ENCODE measurements at regions of chr2 and their contacts with region 1.

Region 1: DNA sequence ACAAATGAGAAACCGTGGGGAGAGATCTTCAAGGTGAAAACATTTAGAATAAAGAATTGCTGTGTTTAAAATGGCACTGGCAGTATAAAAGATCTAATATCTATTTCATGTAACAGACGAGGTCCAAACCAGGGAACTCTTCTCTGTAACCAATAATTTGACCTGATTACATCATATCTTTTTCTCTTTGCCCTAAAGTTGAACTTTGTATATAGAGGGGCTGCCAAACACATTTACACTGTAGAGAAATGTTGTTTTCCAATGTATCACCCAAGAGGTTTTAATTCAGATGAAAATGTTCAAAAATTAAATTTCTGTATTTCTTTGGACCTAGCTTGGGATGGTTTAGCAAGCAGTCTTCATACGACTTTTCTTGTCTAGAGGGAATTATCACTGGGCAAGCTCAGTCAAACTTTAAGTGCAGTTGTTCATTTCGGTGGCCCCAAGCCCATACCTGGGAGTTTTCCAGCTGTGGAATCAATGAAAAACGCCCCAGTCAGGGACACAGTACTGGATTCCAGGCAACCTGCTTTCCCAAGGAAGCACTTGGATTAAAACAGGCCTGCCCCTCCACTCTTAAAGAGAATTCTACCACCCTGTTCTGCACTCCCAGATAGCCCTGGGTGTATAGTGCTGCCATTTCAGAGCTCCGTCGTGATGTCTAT is 208.5 kb upstream of the FN1 start:
- DNase-seq: no peak
- H3K4me3 ChIP-seq: no peak overlapping the region
- H3K4me3 Mint-ChIP-seq: no peak overlapping the region
- H3K27ac ChIP-seq: no peak overlapping the region
- H3K27ac Mint-ChIP-seq: no peak overlapping the region
- H3K4me1 ChIP-seq: no peaks in the 10 kb centered on the region
- H3K4me1 Mint-ChIP-seq: peaks cover 4% of the 10 kb centered on the region
- H3K27me3 ChIP-seq: no peaks in the 10 kb centered on the region
- H3K27me3 Mint-ChIP-seq: peaks cover 1 to 9% (median 2%) of the 10 kb centered on the region in 3 donors
- CTCF ChIP-seq: no peak

Region 2: DNA sequence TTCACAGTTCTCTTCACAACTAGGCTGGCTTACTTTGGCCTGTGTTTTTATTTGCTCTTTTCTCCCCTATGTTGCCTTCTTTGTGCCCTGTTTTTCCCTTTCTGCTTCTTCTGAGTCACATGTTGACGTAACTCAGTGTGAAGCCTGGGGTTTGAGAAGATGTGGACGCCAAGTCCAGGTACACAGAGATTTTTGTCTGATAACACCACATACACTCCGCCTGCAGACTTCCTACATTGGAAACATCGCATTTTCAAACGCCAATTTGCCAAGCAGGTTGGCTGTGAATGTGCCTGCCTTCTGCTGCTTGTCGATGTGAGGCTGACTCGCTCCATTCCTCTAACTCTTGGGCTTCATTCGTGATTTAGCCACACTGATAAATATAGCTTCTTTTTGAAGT is 145.9 kb before region 1 on chr2:
- intact Hi-C with region 1: no loop called
- DNase-seq: no peak
- H3K4me3 ChIP-seq: no peak overlapping the region
- H3K4me3 Mint-ChIP-seq: no peak overlapping the region
- H3K27ac ChIP-seq: no peak overlapping the region
- H3K27ac Mint-ChIP-seq: no peak overlapping the region
- H3K4me1 ChIP-seq: peaks cover 7 to 16% of the 10 kb centered on the region in 2 donors
- H3K4me1 Mint-ChIP-seq: peaks cover 11% of the 10 kb centered on the region
- H3K27me3 ChIP-seq: no peaks in the 10 kb centered on the region
- H3K27me3 Mint-ChIP-seq: peaks cover 0 to 5% (median 3%) of the 10 kb centered on the region in 3 donors
- CTCF ChIP-seq: no peak

Region 3: DNA sequence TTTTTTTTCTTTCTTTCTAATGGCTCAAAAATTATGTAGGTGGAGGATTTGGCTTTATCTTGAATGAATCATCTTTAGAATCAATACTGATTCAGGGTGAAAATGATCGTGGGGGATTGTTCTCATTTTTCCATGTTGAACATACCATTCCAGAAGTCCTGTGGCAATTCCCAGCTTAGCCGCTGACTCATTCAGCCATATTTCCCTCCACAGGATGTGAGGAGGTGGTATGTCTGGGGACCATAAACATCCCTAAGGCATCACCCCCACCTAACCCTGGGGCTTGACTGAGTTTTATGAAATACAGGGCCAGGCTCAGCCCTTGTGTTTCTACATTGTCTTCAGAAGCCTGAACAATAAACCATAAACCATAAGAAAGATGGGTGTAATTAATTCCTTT is 115.8 kb before region 1 on chr2:
- intact Hi-C with region 1: loop called in 1 of 2 experiments (anchors 10 kb)
- DNase-seq: no peak
- H3K4me3 ChIP-seq: no peak overlapping the region
- H3K4me3 Mint-ChIP-seq: no peak overlapping the region
- H3K27ac ChIP-seq: no peak overlapping the region
- H3K27ac Mint-ChIP-seq: no peak overlapping the region
- H3K4me1 ChIP-seq: peaks cover 6 to 11% of the 10 kb centered on the region in 2 donors
- H3K4me1 Mint-ChIP-seq: peaks cover 8% of the 10 kb centered on the region
- H3K27me3 ChIP-seq: no peaks in the 10 kb centered on the region
- H3K27me3 Mint-ChIP-seq: peaks cover 5 to 6% (median 6%) of the 10 kb centered on the region in 3 donors
- CTCF ChIP-seq: no peak

Region 4: GRCh38 chr2:215598376-215598975 is 45.9 kb before region 1 on chr2:
- intact Hi-C with region 1: no loop called
- DNase-seq: no peak
- H3K4me3 ChIP-seq: no peak overlapping the region
- H3K4me3 Mint-ChIP-seq: no peak overlapping the region
- H3K27ac ChIP-seq: no peak overlapping the region
- H3K27ac Mint-ChIP-seq: peak overlapping the region in 1 of 7 donors; percentile 16
- H3K4me1 ChIP-seq: no peaks in the 10 kb centered on the region
- H3K4me1 Mint-ChIP-seq: no peaks in the 10 kb centered on the region
- H3K27me3 ChIP-seq: no peaks in the 10 kb centered on the region
- H3K27me3 Mint-ChIP-seq: peaks cover 0 to 4% (median 2%) of the 10 kb centered on the region in 3 donors
- CTCF ChIP-seq: no peak